Activated naive CD4-positive, alpha-beta T cell treated with anti-CD3 and anti-CD28 coated beads, Interleukin-2, amount 10 ng/mL, durations not matched to agents 7 days and 5 days (primary cell): ENCODE measurements at regions of chr16 and their contacts with region 1.

Region 1: GRCh38 chr16:74998481-74999218 is at the start of gene ZNRF1:
- DNase-seq: peak; percentile 85
- H3K4me3 Mint-ChIP-seq: peak within 1 kb of the TSS; percentile 83
- H3K27ac Mint-ChIP-seq: peak within 1 kb of the TSS; percentile 82
- H3K4me1 Mint-ChIP-seq: peaks cover 20% of the 10 kb centered on the region
- H3K27me3 Mint-ChIP-seq: peaks cover 31% of the 10 kb centered on the region

Region 2: DNA sequence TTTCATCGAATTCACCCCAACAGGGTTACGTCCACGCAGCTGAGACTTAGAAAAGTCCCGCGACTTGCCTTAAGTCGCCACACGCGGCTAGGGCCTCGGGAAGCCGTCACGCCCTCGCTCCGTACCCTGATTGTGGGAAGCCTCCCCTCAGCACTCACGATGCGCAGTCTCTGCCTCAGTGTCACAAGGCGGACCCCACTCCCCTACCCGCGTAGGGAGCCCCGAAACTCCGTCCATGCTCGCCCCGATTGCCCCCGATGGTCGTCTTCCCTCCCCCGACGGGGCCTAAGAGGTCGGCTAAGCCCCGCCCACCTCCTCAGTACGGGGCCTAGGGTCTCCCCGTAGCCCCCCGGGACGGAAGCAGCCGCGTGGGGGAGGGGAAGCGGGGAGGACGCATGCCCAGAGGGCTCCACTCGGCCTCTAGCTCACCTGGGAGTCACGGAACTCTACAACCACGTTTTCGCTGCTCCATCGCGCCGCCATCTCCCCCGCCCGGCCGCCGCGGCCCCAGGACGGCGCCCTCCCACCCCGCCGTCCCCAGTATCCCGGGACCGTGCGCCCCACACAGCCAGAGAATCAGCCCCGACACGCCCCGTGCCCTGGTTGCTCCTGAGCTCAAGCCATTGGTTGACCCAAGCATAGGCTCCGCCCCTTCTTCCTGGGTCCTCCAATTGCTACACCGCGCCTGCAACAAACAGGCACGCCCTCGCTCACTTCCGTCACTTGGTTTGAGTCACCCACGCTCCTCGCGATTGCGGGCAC is 13.9 kb before region 1 on chr16 and contains the start of gene WDR59:
- CTCF ChIA-PET with region 1: interaction called, 19 read pairs
- DNase-seq: peak; percentile 100
- H3K4me3 Mint-ChIP-seq: peak within 1 kb of the TSS; percentile 94
- H3K27ac Mint-ChIP-seq: peak within 1 kb of the TSS; percentile 89
- H3K4me1 Mint-ChIP-seq: peaks cover 17% of the 10 kb centered on the region
- H3K27me3 Mint-ChIP-seq: peaks cover 6% of the 10 kb centered on the region

Region 3: GRCh38 chr16:75074920-75075687 is 76.5 kb after region 1 on chr16:
- CTCF ChIA-PET with region 1: interaction called, 13 read pairs
- DNase-seq: peak; percentile 88
- H3K4me3 Mint-ChIP-seq: peak overlapping the region; percentile 39
- H3K27ac Mint-ChIP-seq: peak overlapping the region; percentile 89
- H3K4me1 Mint-ChIP-seq: peaks cover 63% of the 10 kb centered on the region
- H3K27me3 Mint-ChIP-seq: no peaks in the 10 kb centered on the region

Region 4: DNA sequence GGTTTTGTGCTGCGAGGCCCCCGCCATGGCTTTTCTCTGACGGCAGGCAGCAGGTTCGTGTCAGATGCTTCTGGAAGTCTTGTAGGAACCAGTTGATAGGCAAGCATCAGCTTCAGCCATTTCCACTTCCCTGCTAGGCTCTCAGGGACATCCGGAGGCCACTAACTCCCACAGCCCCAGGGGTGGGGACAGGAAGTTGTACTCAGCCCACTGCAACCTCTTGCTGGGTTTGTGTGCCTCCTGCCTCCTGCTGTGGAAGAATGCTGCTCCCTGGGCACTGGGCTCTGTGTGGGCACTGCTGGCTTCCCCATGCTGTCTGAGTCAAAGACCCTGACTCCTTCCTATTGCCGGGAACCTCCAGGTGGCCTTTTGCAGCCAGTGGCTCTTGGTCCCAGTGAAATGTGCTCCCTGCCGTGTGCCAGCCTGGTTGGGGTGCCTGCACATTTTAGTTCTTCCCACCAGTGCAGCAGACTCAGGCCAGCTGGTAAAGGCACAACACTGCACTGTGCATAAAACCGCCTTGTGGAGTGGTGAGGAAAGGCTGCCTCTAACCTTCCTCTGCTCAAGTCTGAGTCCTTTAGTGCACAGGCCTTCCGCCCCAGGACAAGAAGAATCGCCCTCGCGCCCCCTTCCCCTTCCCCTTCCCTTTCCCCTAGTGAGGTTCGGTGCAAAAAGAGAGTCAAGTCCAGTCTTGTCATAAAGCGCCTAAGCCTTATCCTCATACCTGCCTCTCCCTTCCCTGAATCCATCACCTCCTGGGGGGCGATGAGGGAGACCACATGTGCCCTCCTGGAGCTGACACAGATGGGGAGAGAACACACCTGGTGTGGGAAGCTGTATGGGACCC is 101.3 kb after region 1 on chr16:
- CTCF ChIA-PET with region 1: interaction called, 16 read pairs
- DNase-seq: peak; percentile 66
- H3K4me3 Mint-ChIP-seq: no peak overlapping the region
- H3K27ac Mint-ChIP-seq: peak overlapping the region; percentile 82
- H3K4me1 Mint-ChIP-seq: peaks cover 47% of the 10 kb centered on the region
- H3K27me3 Mint-ChIP-seq: peaks cover 4% of the 10 kb centered on the region